Colonic mucosa (tissue), 4 donors: ENCODE measurements at regions of chr2 and their contacts with region 1.

Region 1: DNA sequence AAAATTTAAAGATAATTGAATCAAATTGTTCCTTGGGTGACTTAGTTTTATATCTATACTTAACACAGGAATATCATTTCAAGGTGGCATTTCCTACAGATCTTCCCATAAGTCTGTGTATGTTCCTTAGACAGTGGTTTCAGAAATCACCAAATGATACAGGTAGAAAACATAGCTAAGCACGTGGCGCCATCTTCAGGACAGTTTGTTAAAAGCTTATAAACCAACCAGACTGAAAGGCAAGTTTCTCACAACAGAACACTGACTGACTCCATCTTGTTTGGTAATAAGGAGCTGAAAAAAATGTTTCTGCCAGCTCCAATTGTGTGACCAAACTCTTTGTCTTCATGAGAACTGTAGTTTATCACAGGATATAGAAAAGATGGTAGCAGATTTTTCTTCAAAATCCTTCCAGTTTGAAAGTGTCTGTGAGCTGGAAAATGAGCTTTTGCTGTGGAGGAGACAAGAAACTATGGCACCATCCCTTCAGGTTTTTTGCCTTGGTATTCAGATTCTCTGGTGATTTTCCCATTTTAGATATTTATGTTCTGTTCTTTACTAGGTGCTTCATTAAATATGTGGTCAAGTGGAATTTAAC is 34.8 kb upstream of the NEUROD1 start:
- DNase-seq: peak; percentile 74
- H3K4me3 ChIP-seq: no peak overlapping the region
- H3K27ac ChIP-seq: no peak overlapping the region
- H3K4me1 ChIP-seq: no peaks in the 10 kb centered on the region
- H3K27me3 ChIP-seq: no peaks in the 10 kb centered on the region
- CTCF ChIP-seq: peak; percentile 55

Region 2: GRCh38 chr2:180125245-180125962 is 1589.7 kb before region 1 on chr2:
- intact Hi-C with region 1: loop called (anchors 5 kb)
- DNase-seq: peak; percentile 31
- H3K4me3 ChIP-seq: no peak overlapping the region
- H3K27ac ChIP-seq: no peak overlapping the region
- H3K4me1 ChIP-seq: no peaks in the 10 kb centered on the region
- H3K27me3 ChIP-seq: no peaks in the 10 kb centered on the region
- CTCF ChIP-seq: peak; percentile 50

Region 3: GRCh38 chr2:181085734-181086133 is 629.4 kb before region 1 on chr2:
- intact Hi-C with region 1: loop called (anchors 10 kb)
- DNase-seq: no peak
- H3K4me3 ChIP-seq: no peak overlapping the region
- H3K27ac ChIP-seq: no peak overlapping the region
- H3K4me1 ChIP-seq: no peaks in the 10 kb centered on the region
- H3K27me3 ChIP-seq: no peaks in the 10 kb centered on the region
- CTCF ChIP-seq: no peak

Region 4: DNA sequence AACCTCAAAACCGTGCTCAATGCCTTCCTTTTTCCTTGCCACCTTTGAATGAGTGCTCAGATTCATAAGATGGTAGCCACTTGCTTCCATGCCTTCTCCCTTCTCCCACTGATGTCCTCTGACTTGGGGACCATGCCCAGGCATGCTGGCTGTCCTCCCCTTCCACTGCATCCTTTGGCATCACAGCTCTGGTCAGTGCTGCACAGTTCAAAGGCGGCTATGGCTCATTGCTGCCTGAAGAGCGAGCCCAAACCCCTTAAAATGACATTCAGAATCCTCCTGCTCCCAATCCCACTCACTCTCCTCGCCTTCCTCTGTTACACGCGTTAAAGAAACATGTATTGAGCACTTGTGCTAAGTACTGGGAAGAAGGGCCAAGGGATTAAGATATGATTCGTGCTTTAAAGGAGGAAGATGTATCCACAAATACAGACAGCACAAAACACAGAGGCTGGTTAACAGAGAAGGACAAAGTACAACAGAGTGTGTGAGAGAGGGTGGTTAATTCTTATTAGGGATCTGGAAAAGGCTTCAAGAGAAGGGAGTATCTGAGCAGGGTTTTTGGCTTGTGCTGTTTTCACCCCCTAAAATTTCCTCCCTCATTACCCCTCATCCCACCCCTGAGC is 140.0 kb before region 1 on chr2:
- intact Hi-C with region 1: loop called (anchors 5 kb)
- DNase-seq: no peak
- H3K4me3 ChIP-seq: no peak overlapping the region
- H3K27ac ChIP-seq: no peak overlapping the region
- H3K4me1 ChIP-seq: no peaks in the 10 kb centered on the region
- H3K27me3 ChIP-seq: no peaks in the 10 kb centered on the region
- CTCF ChIP-seq: no peak

Region 5: GRCh38 chr2:183656121-183656520 is 1941.0 kb after region 1 on chr2:
- intact Hi-C with region 1: no loop called
- DNase-seq: no peak
- H3K4me3 ChIP-seq: no peak overlapping the region
- H3K27ac ChIP-seq: no peak overlapping the region
- H3K4me1 ChIP-seq: no peaks in the 10 kb centered on the region
- H3K27me3 ChIP-seq: no peaks in the 10 kb centered on the region
- CTCF ChIP-seq: no peak